ENCODE measurements at regions of chr1 and their contacts with region 1.

Region 1: DNA sequence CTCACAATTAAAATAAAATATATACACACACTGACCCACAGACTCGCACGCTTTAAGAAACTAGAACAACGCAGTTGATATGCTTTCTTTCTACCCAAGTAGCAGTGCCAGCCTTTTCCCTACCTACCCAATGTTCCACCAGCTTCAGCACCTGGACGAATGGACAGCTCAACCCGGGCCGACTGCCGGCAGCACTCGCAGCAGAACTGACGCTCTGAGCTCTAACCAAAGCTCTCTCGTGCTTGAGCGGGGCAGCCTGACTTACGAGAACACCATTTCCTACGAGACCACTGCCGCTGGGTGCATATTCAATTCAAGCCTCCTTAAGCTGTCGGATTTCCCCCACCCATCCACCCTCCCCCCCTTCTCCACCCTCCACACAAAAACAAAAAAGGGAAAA is 127.4 kb upstream of the DPYD start:
- DNase-seq: peak; percentile 58 to 91
- H3K4me3 ChIP-seq: no peak overlapping the region
- CTCF ChIP-seq: no peak
- POLR2A ChIP-seq: no peak

Region 2: GRCh38 chr1:96973605-96974004 is 1074.6 kb before region 1 on chr1:
- intact Hi-C with region 1: loop called (anchors 10 kb)
- DNase-seq: no peak
- H3K4me3 ChIP-seq: no peak overlapping the region
- CTCF ChIP-seq: no peak
- POLR2A ChIP-seq: no peak

Region 3: GRCh38 chr1:97758541-97759057 is 289.6 kb before region 1 on chr1:
- intact Hi-C with region 1: no loop called
- DNase-seq: no peak
- H3K4me3 ChIP-seq: no peak overlapping the region
- CTCF ChIP-seq: no peak
- POLR2A ChIP-seq: no peak

Measured in lower leg skin (tissue), 4 donors.